WTC11 (cell line): ENCODE measurements at regions of chr7 and their contacts with region 1.

Region 1: GRCh38 chr7:28955718-28956619 is 2.2 kb downstream of the TRIL start:
- DNase-seq: peak; percentile 86
- ATAC-seq: peak; percentile 56
- H3K4me3 Mint-ChIP-seq: peak overlapping the region; percentile 59
- H3K27ac Mint-ChIP-seq: no peak overlapping the region
- H3K4me1 Mint-ChIP-seq: peaks cover 45% of the 10 kb centered on the region
- H3K27me3 Mint-ChIP-seq: peaks cover 57% of the 10 kb centered on the region
- CTCF ChIP-seq: 0 out of 2 replicates have a peak, but pooled peaks have one; percentile 25

Region 2: DNA sequence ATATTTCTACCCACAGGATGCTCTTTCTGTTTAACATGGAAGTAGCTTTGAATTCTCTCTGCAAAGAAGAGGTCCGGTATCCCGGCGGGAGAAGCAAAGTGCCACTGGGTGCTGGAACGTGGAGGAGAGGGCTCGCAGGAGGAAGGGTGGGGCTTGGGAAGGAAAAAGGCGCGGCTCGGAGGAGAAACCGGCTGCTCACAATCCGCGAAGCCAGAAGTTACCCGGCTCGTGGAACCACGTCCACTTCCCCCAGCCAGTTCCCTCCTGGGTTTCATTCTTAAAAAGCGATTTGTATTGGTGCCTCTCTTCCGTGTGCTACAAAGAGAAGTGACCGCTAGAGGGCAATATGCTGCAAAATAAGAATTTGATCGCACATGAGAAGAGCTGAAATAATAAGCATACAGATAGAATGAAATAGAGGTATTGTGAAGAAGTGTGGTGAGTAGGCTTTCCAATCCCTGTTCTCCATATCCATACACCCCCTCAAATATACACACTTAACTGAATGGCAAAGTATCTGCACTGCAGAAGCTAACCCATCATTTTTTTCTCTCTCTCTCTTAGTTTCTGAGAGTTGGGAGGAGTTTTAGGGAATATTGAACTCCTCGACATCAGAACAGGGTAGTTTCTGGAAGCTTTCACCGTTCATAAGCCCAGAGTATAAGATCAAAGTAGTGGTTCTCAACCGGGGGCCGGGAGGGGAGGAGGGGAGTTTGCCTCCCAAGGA is 28.9 kb before region 1 on chr7:
- CTCF ChIA-PET with region 1: interaction called, 407 read pairs
- POLR2A ChIA-PET with region 1: interaction called, 10 read pairs
- DNase-seq: peak; percentile 68
- ATAC-seq: peak; percentile 84
- H3K4me3 Mint-ChIP-seq: peak overlapping the region; percentile 74
- H3K27ac Mint-ChIP-seq: no peak overlapping the region
- H3K4me1 Mint-ChIP-seq: peaks cover 41% of the 10 kb centered on the region
- H3K27me3 Mint-ChIP-seq: peaks cover 8% of the 10 kb centered on the region
- CTCF ChIP-seq: peak; percentile 75

Region 3: GRCh38 chr7:28984631-28985030 is 28.7 kb after region 1 on chr7:
- CTCF ChIA-PET with region 1: interaction called, 42 read pairs
- POLR2A ChIA-PET with region 1: no interaction called
- DNase-seq: no peak
- ATAC-seq: peak; percentile 60
- H3K4me3 Mint-ChIP-seq: no peak overlapping the region
- H3K27ac Mint-ChIP-seq: no peak overlapping the region
- H3K4me1 Mint-ChIP-seq: peaks cover 49% of the 10 kb centered on the region
- H3K27me3 Mint-ChIP-seq: no peaks in the 10 kb centered on the region
- CTCF ChIP-seq: no peak

Region 4: DNA sequence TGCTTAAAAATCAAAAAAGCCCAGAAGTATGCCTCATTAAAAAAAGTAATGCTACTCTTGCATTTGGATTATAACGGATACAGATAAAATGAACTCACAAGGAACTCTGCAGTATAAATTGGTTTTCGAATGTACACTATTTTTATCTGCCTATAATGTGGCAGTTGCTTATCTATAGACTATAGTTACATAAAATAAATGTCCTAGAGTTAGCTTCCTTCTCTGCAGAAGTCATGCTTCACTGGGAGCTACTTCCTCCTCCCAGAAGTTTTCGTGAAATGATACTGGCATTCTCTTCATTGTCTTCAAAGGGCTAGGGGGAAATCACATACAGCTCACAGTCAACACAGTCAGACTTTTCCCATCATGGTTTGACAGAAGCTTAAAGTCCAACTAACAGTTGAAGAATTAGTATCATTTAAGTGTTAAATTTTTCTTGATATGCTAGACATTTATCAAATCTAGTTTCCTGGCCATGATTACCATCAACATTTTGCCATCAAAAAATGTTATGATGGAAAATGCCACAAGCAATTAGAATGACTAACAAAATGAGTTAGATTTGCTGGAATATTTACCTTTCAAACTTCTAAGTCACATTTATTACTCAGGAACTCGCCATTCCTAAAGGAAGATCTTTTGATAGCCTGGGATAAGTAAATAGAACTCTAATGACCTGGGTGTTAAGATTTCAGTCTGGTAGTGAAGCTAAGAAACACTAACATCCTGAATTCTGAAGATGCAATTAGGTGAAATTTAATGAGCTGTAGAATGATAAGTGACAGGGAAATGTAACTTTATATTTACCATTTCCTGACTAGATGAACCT is 89.5 kb after region 1 on chr7:
- CTCF ChIA-PET with region 1: interaction called, 16 read pairs
- POLR2A ChIA-PET with region 1: no interaction called
- DNase-seq: no peak
- ATAC-seq: no peak
- H3K4me3 Mint-ChIP-seq: no peak overlapping the region
- H3K27ac Mint-ChIP-seq: no peak overlapping the region
- H3K4me1 Mint-ChIP-seq: peaks cover 56% of the 10 kb centered on the region
- H3K27me3 Mint-ChIP-seq: peaks cover 24% of the 10 kb centered on the region
- CTCF ChIP-seq: no peak

Region 5: GRCh38 chr7:29091715-29092114 is 135.7 kb after region 1 on chr7:
- CTCF ChIA-PET with region 1: interaction called, 39 read pairs
- POLR2A ChIA-PET with region 1: interaction called, 3 read pairs
- DNase-seq: no peak
- ATAC-seq: 0 out of 2 replicates have a peak, but pooled peaks have one; percentile 46
- H3K4me3 Mint-ChIP-seq: no peak overlapping the region
- H3K27ac Mint-ChIP-seq: no peak overlapping the region
- H3K4me1 Mint-ChIP-seq: peaks cover 23% of the 10 kb centered on the region
- H3K27me3 Mint-ChIP-seq: no peaks in the 10 kb centered on the region; the same call in 1 of the 2 replicates
- CTCF ChIP-seq: no peak

Region 6: GRCh38 chr7:29123626-29124190 is 167.7 kb after region 1 on chr7:
- CTCF ChIA-PET with region 1: interaction called, 11 read pairs
- POLR2A ChIA-PET with region 1: no interaction called
- DNase-seq: no peak
- ATAC-seq: no peak
- H3K4me3 Mint-ChIP-seq: no peak overlapping the region
- H3K27ac Mint-ChIP-seq: no peak overlapping the region
- H3K4me1 Mint-ChIP-seq: peaks cover 43% of the 10 kb centered on the region
- H3K27me3 Mint-ChIP-seq: no peaks in the 10 kb centered on the region; the same call in 1 of the 2 replicates
- CTCF ChIP-seq: no peak